ENCODE measurements at regions of chr12 and their contacts with region 1.

Region 1: GRCh38 chr12:66169221-66170170 is at the start of gene TMBIM4:
- DNase-seq: peak; percentile 83
- H3K4me3 ChIP-seq: peak within 1 kb of the TSS; percentile 91
- H3K27ac ChIP-seq: peak within 1 kb of the TSS; percentile 99
- H3K27me3 ChIP-seq: no peaks in the 10 kb centered on the region
- CTCF ChIP-seq: peak; percentile 54
- polyA plus RNA-seq, gene TMBIM4: 102 and 140 TPM in 2 replicates

Region 2: DNA sequence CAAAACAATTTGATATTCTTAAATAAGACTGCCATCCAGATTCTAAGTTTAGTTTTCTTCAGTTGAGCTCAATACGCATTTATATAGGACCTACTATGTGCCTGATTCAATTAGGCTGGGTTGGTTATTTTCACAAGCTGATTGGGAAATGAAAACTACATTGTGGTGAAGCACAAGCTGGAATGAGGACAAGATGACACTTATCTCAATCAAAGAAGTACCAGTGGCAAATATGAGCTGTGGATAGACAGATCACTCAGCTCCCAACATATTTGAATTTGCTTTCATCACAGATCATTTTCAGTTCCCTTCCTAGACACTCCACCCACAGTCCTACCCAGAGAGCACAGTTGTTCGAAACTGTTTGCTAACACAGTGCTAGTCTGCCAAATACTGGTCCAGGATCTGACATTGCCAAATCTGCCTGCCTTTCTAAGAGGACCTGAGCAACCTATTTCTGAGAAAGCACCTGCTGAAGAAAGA is 113.6 kb before region 1 on chr12:
- CTCF ChIA-PET with region 1: no interaction called
- POLR2A ChIA-PET with region 1: no interaction called
- DNase-seq: no peak
- H3K4me3 ChIP-seq: no peak overlapping the region
- H3K27ac ChIP-seq: no peak overlapping the region
- H3K27me3 ChIP-seq: no peaks in the 10 kb centered on the region
- CTCF ChIP-seq: no peak

Region 3: GRCh38 chr12:66130277-66131066 is 39.0 kb before region 1 on chr12 and contains the start of gene LLPH:
- CTCF ChIA-PET with region 1: interaction called, 4 read pairs
- POLR2A ChIA-PET with region 1: interaction called, 14 read pairs
- DNase-seq: peak; percentile 50
- H3K4me3 ChIP-seq: peak within 1 kb of the TSS; percentile 100
- H3K27ac ChIP-seq: peak within 1 kb of the TSS; percentile 61
- H3K27me3 ChIP-seq: no peaks in the 10 kb centered on the region
- CTCF ChIP-seq: no peak
- polyA plus RNA-seq, gene LLPH: 18.6 and 25.7 TPM in 2 replicates

Region 4: DNA sequence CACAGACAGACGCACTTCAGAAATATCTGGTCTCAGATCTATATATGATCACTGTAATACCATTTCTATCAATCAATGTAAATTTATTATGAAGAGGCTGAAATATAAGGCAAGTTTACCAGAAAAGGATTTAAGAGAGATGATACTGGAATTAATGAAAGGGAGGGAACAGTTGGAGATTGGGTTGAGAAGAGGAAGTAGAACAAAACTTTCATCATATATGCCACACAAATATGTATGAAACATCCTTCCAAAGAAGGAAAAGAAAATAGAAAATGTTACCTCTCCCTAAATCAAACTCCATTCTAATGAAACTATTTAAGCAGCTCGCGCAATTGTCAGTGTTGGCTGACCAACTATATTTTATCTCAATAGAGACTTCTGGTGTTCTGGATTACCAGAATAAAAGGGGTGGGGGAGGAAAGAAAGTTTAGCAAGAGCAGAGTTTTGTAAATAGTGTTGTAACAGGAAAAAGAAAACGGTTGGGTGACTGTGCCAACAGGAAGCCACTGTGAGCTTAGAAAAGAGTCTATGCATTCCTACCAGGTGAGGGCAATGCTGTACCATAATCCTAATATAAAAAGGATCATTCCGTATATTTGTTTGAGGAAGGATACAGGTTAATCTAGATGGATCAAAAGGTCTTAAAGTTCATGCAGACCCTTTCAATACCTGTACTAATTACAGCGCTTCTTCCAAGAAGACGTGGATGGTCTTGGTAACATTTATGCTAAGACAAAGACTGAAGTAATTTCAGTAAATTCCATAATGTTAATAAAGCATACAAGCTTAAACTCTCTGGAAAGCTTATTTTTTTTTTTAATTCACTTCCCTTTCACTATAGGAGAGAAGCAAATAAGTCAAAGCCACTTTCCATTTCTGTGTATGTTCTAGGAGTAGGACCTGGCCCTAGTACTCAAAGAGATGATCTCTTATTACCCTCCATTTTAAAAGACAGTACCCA is 24.4 kb before region 1 on chr12:
- CTCF ChIA-PET with region 1: interaction called, 19 read pairs
- POLR2A ChIA-PET with region 1: interaction called, 10 read pairs
- DNase-seq: no peak
- H3K4me3 ChIP-seq: no peak overlapping the region
- H3K27ac ChIP-seq: no peak overlapping the region
- H3K27me3 ChIP-seq: no peaks in the 10 kb centered on the region
- CTCF ChIP-seq: peak; percentile 58

Region 5: DNA sequence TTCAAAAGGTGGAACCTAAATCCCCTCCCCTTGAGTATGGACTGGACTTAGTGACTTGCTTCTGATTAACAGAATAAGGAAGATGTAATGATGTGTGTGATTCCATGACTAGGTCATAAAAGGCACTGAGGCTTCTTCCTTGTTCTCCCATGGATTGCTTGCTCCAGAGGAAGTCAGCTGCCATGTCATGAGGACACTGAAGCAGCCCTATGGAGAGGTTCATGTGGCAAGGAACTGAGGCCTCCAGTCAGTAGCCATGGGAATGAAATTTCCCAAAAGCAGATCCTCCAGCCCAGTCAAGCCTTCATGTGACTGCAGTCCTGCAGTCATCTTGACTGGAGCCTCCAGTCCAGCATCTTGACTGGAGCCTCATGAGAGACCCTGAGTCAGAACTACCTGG is 10.4 kb before region 1 on chr12:
- CTCF ChIA-PET with region 1: interaction called, 10 read pairs
- POLR2A ChIA-PET with region 1: interaction called, 8 read pairs
- DNase-seq: no peak
- H3K4me3 ChIP-seq: no peak overlapping the region
- H3K27ac ChIP-seq: no peak overlapping the region
- H3K27me3 ChIP-seq: no peaks in the 10 kb centered on the region
- CTCF ChIP-seq: no peak

Region 6: GRCh38 chr12:66188584-66189485 is 19.3 kb after region 1 on chr12 and contains the start of gene IRAK3:
- CTCF ChIA-PET with region 1: interaction called, 5 read pairs
- POLR2A ChIA-PET with region 1: interaction called, 12 read pairs
- DNase-seq: no peak
- H3K4me3 ChIP-seq: peak within 1 kb of the TSS; percentile 66
- H3K27ac ChIP-seq: no peak within 1 kb of the TSS
- H3K27me3 ChIP-seq: peaks cover 6% of the 10 kb centered on the region
- CTCF ChIP-seq: no peak
- polyA plus RNA-seq, gene IRAK3: 2.9 and 3.4 TPM in 2 replicates

Region 7: DNA sequence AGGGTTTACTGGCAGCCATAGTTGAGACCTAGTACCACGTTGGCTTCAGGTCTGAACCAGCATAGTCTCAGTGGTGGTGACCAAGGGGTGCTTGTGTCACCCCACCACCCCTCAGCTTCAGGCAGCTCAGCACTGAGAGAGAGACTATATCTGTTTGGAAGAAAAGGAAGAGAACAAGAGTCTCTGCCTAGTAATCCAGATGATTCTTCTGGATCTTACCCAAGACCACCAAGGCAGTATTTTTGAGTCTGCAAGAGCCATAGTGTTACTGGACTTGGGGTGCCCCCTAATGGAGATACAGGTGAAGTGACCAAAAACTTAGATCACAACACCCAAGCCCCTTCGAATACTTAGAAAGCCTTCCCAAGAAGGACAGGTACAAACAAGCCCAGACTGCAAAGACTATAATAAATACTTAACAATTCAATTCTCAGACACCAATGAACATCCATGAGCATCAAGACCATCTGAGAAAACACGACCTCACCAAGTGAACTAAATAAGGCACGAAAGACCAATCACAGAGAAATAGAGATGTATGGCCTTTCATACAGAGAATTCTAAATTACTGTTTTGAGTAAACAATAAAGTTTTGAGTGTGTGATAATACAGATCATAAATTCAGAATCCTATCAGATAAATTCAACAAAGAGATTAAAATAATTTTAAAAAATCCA is 239.8 kb after region 1 on chr12:
- CTCF ChIA-PET with region 1: no interaction called
- POLR2A ChIA-PET with region 1: interaction called, 10 read pairs
- DNase-seq: peak; percentile 61
- H3K4me3 ChIP-seq: no peak overlapping the region
- H3K27ac ChIP-seq: no peak overlapping the region
- H3K27me3 ChIP-seq: no peaks in the 10 kb centered on the region
- CTCF ChIP-seq: peak; percentile 82

Measured in AG04450 (cell line).